Endothelial cell of umbilical vein (primary cell): ENCODE measurements at regions of chr4 and their contacts with region 1.

Region 1: GRCh38 chr4:11529625-11530201 is 101.0 kb upstream of the HS3ST1 start:
- DNase-seq: peak; percentile 93
- H3K4me3 ChIP-seq: no peak overlapping the region
- H3K27ac ChIP-seq: peak overlapping the region; percentile 82
- H3K4me1 ChIP-seq: peaks cover 27% of the 10 kb centered on the region
- H3K27me3 ChIP-seq: no peaks in the 10 kb centered on the region
- CTCF ChIP-seq: no peak
- POLR2A ChIP-seq: no peak

Region 2: DNA sequence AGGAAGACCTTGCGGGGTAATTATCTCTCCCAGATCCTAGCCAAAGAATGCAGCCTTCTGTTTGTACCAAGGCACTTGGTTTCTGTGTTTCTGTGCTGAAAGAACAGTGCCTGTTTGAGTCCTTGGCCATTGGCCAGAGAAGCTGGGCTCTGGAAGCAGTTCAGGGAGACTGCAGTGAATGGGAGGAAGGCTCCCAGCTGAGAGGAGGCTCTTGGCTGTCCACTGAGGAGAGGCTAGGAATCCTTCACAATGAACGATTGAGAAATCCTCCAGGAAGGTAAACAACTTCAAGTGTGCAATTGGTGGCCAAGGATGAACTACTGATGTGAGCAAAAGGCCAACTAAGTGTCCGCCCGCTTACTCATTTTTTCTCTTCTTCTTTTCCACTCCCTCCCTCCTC is 162.3 kb before region 1 on chr4:
- CTCF ChIA-PET with region 1: no interaction called
- POLR2A ChIA-PET with region 1: no interaction called
- dilution Hi-C with region 1: no loop called
- intact Hi-C with region 1: no loop called
- DNase-seq: peak; percentile 7
- H3K4me3 ChIP-seq: no peak overlapping the region
- H3K27ac ChIP-seq: no peak overlapping the region
- H3K4me1 ChIP-seq: no peaks in the 10 kb centered on the region
- H3K27me3 ChIP-seq: peaks cover 9 to 20% of the 10 kb centered on the region in 2 experiments
- CTCF ChIP-seq: no peak
- POLR2A ChIP-seq: no peak

Region 3: DNA sequence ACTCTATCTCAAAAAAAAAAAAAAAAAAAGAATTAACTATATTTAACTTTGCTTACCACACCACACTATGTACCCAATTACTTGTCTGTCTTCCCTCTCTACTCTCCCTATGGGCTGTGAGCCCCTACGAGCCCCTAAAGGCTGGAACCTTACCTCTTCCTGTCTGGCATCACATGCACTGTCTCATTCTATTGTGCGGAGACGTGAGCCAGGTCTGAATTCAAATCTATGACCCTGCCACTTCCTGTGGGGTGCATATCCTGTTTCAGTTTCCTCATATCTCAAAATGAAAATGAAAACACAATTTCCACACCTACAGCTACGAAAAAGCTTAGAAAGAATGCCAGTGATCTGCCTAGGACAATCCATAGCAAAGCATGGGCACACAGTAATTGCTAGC is 58.1 kb before region 1 on chr4:
- CTCF ChIA-PET with region 1: no interaction called
- POLR2A ChIA-PET with region 1: no interaction called
- dilution Hi-C with region 1: no loop called
- intact Hi-C with region 1: loop called (anchors 5 kb)
- DNase-seq: peak; percentile 76
- H3K4me3 ChIP-seq: peak overlapping the region in 1 of 3 experiments; percentile 24
- H3K27ac ChIP-seq: peak overlapping the region; percentile 59
- H3K4me1 ChIP-seq: peaks cover 32% of the 10 kb centered on the region
- H3K27me3 ChIP-seq: no peaks in the 10 kb centered on the region
- CTCF ChIP-seq: no peak
- POLR2A ChIP-seq: no peak